ENCODE measurements at regions of chr16 and their contacts with region 1.

Region 1: DNA sequence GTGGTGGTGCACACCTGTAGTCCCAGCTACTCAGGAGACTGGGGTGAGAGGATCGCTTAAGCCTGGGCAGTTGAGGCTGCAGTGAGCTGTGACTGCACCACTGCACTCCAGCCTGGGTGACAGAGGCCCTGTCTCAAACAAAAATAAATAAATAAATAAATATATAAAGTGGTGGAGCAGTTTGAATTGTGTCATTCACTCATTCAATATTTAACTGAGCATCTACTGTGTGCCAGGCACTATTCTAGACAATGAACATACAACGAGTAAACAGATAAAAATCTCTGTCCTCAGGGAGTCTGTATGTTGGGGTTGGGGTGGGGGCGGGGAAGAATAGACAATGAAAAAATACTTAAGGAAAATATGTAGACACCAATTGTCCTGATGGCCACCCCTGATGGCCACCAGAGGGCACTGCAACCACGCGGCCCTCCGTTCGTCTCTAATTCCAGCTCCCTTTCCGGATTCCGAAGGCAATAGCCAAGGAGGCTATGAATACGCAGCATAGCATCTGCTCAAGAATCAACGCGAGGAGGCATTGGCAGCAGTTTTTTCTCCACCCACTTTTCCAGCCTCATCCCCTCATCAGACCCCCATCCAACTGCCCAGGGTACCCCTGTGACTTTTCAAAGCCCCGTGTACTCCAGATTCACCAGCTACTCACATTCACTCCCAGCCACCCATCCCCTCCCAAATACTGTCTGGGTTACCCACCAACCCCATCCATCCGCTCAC is 21.4 kb downstream of the QPRT start:
- DNase-seq: no peak
- ATAC-seq: peak; percentile 54
- H3K4me3 ChIP-seq: no peak overlapping the region
- H3K27ac ChIP-seq: no peak overlapping the region
- H3K4me1 ChIP-seq: peaks cover 13% of the 10 kb centered on the region
- H3K27me3 ChIP-seq: no peaks in the 10 kb centered on the region
- CTCF ChIP-seq: peak; percentile 69 to 76 (median 73)
- EP300 ChIP-seq: no peak
- POLR2A ChIP-seq: no peak
- RAD21 ChIP-seq: peak; percentile 87

Region 2: DNA sequence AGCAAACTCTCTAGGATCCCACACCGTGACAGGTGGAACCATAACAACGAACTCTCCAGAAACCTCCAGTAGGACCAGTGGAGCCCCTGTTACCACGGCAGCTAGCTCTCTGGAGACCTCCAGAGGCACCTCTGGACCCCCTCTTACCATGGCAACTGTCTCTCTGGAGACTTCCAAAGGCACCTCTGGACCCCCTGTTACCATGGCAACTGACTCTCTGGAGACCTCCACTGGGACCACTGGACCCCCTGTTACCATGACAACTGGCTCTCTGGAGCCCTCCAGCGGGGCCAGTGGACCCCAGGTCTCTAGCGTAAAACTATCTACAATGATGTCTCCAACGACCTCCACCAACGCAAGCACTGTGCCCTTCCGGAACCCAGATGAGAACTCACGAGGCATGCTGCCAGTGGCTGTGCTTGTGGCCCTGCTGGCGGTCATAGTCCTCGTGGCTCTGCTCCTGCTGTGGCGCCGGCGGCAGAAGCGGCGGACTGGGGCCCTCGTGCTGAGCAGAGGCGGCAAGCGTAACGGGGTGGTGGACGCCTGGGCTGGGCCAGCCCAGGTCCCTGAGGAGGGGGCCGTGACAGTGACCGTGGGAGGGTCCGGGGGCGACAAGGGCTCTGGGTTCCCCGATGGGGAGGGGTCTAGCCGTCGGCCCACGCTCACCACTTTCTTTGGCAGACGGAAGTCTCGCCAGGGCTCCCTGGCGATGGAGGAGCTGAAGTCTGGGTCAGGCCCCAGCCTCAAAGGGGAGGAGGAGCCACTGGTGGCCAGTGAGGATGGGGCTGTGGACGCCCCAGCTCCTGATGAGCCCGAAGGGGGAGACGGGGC is 36.1 kb before region 1 on chr16:
- CTCF ChIA-PET with region 1: interaction called, 3 read pairs
- POLR2A ChIA-PET with region 1: interaction called, 5 read pairs
- RAD21 ChIA-PET with region 1: interaction called, 11 read pairs
- SMC1A ChIA-PET with region 1: interaction called, 11 read pairs
- in situ Hi-C with region 1: no loop called
- intact Hi-C with region 1: no loop called
- DNase-seq: no peak
- ATAC-seq: peak; percentile 20
- H3K4me3 ChIP-seq: peak overlapping the region; percentile 99
- H3K27ac ChIP-seq: peak overlapping the region; percentile 81
- H3K4me1 ChIP-seq: peaks cover 12% of the 10 kb centered on the region
- H3K27me3 ChIP-seq: no peaks in the 10 kb centered on the region
- CTCF ChIP-seq: peak; percentile 17 to 23 (median 17); a peak in 2 of 6 replicates
- EP300 ChIP-seq: no peak
- POLR2A ChIP-seq: peak; percentile 71
- RAD21 ChIP-seq: no peak

Region 3: DNA sequence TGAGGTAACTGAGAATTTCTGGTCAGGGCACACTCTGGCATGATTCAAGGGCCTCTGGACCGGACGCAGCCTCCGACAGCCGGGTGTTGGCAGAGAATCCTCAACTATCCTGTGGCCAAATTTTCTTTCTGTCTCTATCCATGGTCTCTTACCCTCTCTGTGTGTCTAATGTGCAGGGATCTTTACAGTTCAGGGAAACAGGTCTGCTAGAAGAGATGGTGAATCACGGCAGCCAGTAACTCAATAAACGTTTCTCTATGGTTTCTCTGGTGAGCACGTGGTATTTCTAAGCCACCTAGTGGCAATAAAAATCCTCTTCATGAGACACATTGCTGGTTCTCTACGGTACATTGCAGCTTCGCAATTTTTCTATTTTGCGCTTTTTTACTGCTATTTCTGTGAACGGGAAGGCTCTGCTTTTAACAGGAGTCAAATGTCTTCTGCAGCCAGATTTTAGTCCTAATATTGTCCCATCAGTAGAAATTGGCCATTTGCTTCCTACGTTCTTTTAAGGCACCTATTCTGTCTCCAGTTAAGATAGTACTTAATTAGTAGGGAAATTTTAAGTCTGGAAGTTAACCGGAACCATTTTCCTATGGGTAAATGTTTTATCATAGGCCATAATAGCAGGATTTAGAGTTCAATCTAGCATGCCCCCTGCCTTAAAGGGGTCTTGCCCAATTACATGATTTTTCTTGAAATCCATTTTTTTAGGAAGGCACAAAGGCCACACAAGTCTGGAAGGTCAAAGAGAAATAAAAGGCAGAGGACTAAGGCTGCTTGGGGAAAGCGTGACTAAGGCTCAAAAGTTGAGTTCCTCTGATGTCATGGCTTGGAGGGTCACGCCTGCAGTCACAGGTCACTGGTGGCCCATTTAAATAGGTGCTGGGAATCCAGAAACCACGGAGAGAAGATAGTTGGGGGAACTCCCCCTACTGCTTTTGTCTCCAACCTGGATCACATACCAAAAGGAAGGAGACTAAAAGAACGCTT is 10.1 kb after region 1 on chr16:
- CTCF ChIA-PET with region 1: interaction called, 8 read pairs
- POLR2A ChIA-PET with region 1: interaction called, 7 read pairs
- RAD21 ChIA-PET with region 1: interaction called, 3 read pairs
- SMC1A ChIA-PET with region 1: interaction called, 14 read pairs
- in situ Hi-C with region 1: no loop called
- intact Hi-C with region 1: no loop called
- DNase-seq: no peak
- ATAC-seq: peak; percentile 94
- H3K4me3 ChIP-seq: no peak overlapping the region
- H3K27ac ChIP-seq: no peak overlapping the region
- H3K4me1 ChIP-seq: peaks cover 9% of the 10 kb centered on the region
- H3K27me3 ChIP-seq: no peaks in the 10 kb centered on the region; a peak in 1 of 4 replicates
- CTCF ChIP-seq: peak; percentile 52 to 75 (median 58); a peak in 5 of 6 replicates
- EP300 ChIP-seq: no peak
- POLR2A ChIP-seq: no peak
- RAD21 ChIP-seq: peak; percentile 53

Region 4: GRCh38 chr16:29729116-29729521 is 28.7 kb after region 1 on chr16:
- CTCF ChIA-PET with region 1: interaction called, 12 read pairs
- POLR2A ChIA-PET with region 1: interaction called, 5 read pairs
- RAD21 ChIA-PET with region 1: interaction called, 6 read pairs
- SMC1A ChIA-PET with region 1: interaction called, 8 read pairs
- in situ Hi-C with region 1: no loop called
- intact Hi-C with region 1: no loop called
- DNase-seq: no peak
- ATAC-seq: no peak
- H3K4me3 ChIP-seq: no peak overlapping the region
- H3K27ac ChIP-seq: no peak overlapping the region
- H3K4me1 ChIP-seq: peaks cover 17% of the 10 kb centered on the region
- H3K27me3 ChIP-seq: no peaks in the 10 kb centered on the region
- CTCF ChIP-seq: peak; percentile 44 to 56 (median 54); a peak in 5 of 6 replicates
- EP300 ChIP-seq: no peak
- POLR2A ChIP-seq: no peak
- RAD21 ChIP-seq: peak; percentile 36

Region 5: DNA sequence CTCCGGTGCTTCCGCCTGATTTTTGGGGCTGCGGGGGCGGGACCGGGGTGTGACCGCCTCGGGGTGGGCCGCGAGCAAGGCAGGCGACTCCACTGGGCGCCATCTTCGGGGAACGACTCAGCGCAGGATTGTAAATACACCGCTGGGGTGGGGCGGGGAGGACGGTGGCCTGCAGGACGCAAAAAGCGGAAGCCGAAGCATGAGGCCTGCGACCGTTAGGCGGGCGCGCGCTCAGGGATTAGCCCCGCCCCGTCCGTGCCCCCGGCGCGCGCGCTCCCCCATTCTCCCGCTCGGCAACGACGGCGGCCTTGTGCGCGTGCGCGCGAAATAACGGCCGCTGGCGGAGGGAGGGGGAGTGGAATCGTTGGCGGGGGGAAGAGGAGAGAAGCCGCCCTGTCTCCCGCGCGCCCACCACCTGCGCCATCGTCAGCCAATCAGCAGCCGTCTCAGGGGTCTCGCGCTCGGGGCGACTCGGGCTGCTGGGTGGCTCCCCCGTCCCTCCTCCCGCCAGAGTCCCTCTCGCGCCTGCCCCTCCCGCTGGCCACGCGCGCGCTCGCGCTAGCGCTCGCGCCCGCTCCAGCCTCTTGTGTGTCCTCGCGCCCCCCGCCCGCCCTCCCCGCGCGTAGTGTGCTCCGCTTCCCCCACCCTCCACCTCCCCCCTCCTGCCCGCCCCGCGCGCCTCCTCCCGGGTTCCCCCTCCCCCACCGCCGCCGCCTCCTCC is 105.1 kb after region 1 on chr16:
- CTCF ChIA-PET with region 1: interaction called, 5 read pairs
- POLR2A ChIA-PET with region 1: no interaction called
- RAD21 ChIA-PET with region 1: interaction called, 4 read pairs
- SMC1A ChIA-PET with region 1: no interaction called
- in situ Hi-C with region 1: no loop called
- intact Hi-C with region 1: loop called (anchors 5 kb)
- DNase-seq: peak; percentile 76
- ATAC-seq: peak; percentile 78
- H3K4me3 ChIP-seq: peak overlapping the region; percentile 73
- H3K27ac ChIP-seq: peak overlapping the region; percentile 91
- H3K4me1 ChIP-seq: peaks cover 23% of the 10 kb centered on the region
- H3K27me3 ChIP-seq: no peaks in the 10 kb centered on the region
- CTCF ChIP-seq: 0 out of 6 replicates have a peak, but pooled peaks of 1 of the 3 experiments have one; percentile 0
- EP300 ChIP-seq: peak; percentile 46 to 79; a peak in 2 of 4 replicates
- POLR2A ChIP-seq: peak; percentile 95
- RAD21 ChIP-seq: no peak

Region 6: GRCh38 chr16:29862884-29863668 is 162.7 kb after region 1 on chr16 and contains the start of gene CDIPT:
- CTCF ChIA-PET with region 1: no interaction called
- POLR2A ChIA-PET with region 1: no interaction called
- RAD21 ChIA-PET with region 1: no interaction called
- SMC1A ChIA-PET with region 1: no interaction called
- in situ Hi-C with region 1: no loop called
- intact Hi-C with region 1: no loop called
- DNase-seq: peak; percentile 92
- ATAC-seq: peak; percentile 99
- H3K4me3 ChIP-seq: peak within 1 kb of the TSS; percentile 92
- H3K27ac ChIP-seq: peak within 1 kb of the TSS; percentile 95
- H3K4me1 ChIP-seq: peaks cover 4% of the 10 kb centered on the region
- H3K27me3 ChIP-seq: 0 out of 4 replicates have a peak, but pooled peaks cover 0 to 1% of the 10 kb centered on the region in 2 experiments
- CTCF ChIP-seq: peak; percentile 83 to 96 (median 84)
- EP300 ChIP-seq: no peak
- POLR2A ChIP-seq: peak; percentile 59; the same call in 1 of the 2 replicates
- RAD21 ChIP-seq: no peak
- polyA plus RNA-seq, gene CDIPT: 0.87 to 3.5 TPM

Region 7: DNA sequence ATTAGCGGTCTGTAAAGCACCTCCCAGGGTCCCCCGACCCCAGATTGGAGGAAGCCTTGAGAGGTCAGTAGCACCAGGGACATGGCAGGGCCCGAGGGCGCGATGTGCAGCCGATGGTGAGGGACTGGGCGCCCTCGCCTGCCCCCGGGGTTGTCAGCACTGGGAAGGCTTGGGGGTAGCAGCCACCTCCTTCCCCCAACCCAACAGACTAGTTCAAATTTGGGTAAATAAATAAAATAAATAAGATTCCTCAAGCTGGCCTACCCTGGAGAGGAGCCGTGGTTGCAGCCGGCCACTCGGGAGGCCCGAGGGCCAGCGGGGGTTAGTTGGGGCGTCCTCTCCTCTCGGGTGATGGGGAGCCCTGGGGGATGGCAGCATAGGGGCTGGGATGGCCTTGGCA is 324.0 kb after region 1 on chr16:
- CTCF ChIA-PET with region 1: no interaction called
- POLR2A ChIA-PET with region 1: no interaction called
- RAD21 ChIA-PET with region 1: no interaction called
- SMC1A ChIA-PET with region 1: no interaction called
- in situ Hi-C with region 1: loop called (anchors 5 kb)
- intact Hi-C with region 1: loop called (anchors 5 kb)
- DNase-seq: no peak
- ATAC-seq: no peak
- H3K4me3 ChIP-seq: no peak overlapping the region
- H3K27ac ChIP-seq: no peak overlapping the region
- H3K4me1 ChIP-seq: 0 out of 2 replicates have a peak, but pooled peaks cover 2% of the 10 kb centered on the region
- H3K27me3 ChIP-seq: peaks cover 3 to 6% of the 10 kb centered on the region in 2 experiments; a peak in 3 of 4 replicates
- CTCF ChIP-seq: no peak
- EP300 ChIP-seq: no peak
- POLR2A ChIP-seq: no peak
- RAD21 ChIP-seq: no peak